KBM-7 (cell line): ENCODE measurements at regions of chr1 and their contacts with region 1.

Region 1: GRCh38 chr1:175319418-175320230 is 127.0 kb upstream of the KIAA0040 start:
- DNase-seq: peak; percentile 74

Region 2: DNA sequence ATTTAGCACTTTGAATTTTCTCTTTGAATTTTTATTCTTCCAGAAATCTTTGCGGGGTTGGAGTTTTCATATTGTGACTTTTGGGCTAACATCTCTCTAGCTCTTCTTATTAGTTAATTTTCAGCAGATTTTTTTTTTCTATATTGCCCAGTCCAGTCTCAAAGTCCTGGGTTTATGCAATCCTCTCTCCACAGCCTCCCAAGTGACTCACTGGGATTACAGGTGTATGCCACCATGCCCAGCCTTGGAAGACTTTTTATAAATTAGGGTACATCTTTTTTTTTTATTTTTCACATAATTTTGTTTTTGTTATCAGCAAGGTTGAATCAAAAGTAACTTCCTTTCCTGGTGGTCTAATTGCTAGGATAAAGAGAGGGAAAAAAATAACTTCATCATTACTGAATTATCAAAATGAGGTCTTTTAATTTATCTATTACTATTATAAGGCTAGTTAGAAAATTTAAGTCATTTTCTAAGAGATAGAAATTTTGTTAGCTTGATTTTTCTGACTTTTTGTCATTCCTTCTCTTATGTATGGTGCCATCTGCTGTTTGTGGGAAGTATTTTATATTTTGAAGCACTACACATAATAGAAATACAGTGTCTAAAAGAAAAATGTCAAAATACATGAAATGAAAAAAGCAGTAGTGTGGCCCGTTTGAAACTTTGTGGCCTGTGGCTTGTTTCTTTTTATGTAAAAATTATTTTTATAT is 593.3 kb before region 1 on chr1:
- in situ Hi-C with region 1: no loop called
- DNase-seq: peak; percentile 55

Region 3: GRCh38 chr1:175043824-175044223 is 275.8 kb before region 1 on chr1:
- in situ Hi-C with region 1: loop called (anchors 25 kb)
- DNase-seq: no peak

Region 4: GRCh38 chr1:175146529-175147213 is 173.0 kb before region 1 on chr1:
- in situ Hi-C with region 1: loop called (anchors 10 kb)
- DNase-seq: peak; percentile 81

Region 5: GRCh38 chr1:176058686-176059085 is 739.1 kb after region 1 on chr1:
- in situ Hi-C with region 1: no loop called
- DNase-seq: no peak